Head of caudate nucleus (tissue), 42 donors: ENCODE measurements at regions of chr16 and their contacts with region 1.

Region 1: GRCh38 chr16:14249291-14250032 is 178.3 kb downstream of the MRTFB start:
- DNase-seq: peak in 35 of 42 donors; percentile 25 to 83 (median 56)

Region 2: DNA sequence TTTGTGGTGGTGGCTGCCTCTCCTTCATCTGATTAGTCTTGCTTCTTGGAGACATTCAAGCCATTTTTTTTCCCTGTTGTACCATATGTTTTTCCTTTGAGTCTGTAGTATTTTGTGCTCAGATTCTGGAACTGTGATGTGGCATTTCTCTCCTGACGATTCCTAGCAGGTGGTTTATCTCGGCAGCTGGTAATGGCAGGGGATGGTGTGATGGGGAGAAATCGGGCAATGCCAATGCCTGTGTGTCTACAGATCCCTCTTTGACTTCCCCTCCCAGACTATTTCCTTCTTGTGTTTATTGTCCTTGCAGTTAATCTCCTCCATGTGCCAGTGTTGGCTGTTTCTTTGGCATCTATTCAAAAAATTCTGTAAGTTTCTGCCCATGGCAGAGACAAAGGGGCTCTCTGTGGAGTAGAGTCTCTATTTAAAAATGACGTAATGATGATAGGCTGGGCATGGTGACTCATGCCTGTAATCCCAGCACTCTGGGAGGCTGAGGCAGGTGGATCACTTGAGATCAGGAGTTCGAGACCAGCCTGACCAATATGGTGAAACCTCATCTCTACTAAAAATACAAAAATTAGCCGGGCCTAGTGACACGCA is 419.7 kb before region 1 on chr16:
- intact Hi-C with region 1: no loop called
- DNase-seq: peak in 1 of 42 donors; percentile 36

Region 3: DNA sequence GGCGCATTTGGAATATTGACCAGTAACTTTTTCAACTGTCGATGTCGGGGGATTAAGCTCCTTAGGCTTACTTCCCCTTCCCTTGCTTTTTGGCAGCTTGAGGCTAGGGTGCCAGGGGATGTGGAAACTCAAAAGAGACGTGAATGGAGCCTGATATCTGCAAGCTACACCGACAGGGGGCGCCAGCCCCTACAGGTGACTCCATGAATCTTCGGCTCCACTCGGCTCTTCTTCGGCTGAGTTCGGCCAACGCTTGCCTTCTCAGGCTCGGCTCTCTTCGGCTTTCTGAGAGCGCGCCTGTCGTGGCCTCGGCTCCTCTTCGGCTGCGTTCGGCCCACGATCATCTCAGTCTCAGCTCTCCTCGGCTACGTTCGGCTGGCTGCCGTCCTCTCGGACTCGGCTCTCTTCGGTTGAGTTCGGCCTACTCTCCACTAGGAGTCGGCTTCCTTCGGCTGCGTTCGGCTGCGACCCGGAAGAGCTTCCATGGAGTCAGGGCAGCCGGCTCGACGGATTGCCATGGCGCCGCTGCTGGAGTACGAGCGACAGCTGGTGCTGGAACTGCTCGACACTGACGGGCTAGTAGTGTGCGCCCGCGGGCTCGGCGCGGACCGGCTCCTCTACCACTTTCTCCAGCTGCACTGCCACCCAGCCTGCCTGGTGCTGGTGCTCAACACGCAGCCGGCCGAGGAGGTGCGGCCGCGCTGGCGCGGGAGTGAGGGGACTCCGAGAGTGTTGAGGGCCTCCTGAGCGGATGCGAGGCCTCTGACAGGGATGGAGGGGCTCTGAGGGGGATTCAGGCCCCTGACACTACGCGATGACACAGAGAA is 329.6 kb before region 1 on chr16 and contains the start of gene ERCC4:
- intact Hi-C with region 1: loop called (anchors 10 kb)
- DNase-seq: peak; percentile 97 to 100 (median 99)

Region 4: GRCh38 chr16:14125000-14125681 is 124.3 kb before region 1 on chr16:
- intact Hi-C with region 1: no loop called
- DNase-seq: no peak

Region 5: GRCh38 chr16:14186007-14186794 is 63.3 kb before region 1 on chr16:
- intact Hi-C with region 1: no loop called
- DNase-seq: peak; percentile 38 to 86 (median 62)

Region 6: GRCh38 chr16:14445937-14446715 is 196.7 kb after region 1 on chr16:
- intact Hi-C with region 1: no loop called
- DNase-seq: peak in 11 of 42 donors; percentile 20 to 57 (median 36)

Region 7: GRCh38 chr16:14529010-14529669 is 279.7 kb after region 1 on chr16:
- intact Hi-C with region 1: loop called (anchors 2 kb)
- DNase-seq: peak; percentile 53 to 89 (median 77)